ENCODE measurements at regions of chr11 and their contacts with region 1.

Region 1: DNA sequence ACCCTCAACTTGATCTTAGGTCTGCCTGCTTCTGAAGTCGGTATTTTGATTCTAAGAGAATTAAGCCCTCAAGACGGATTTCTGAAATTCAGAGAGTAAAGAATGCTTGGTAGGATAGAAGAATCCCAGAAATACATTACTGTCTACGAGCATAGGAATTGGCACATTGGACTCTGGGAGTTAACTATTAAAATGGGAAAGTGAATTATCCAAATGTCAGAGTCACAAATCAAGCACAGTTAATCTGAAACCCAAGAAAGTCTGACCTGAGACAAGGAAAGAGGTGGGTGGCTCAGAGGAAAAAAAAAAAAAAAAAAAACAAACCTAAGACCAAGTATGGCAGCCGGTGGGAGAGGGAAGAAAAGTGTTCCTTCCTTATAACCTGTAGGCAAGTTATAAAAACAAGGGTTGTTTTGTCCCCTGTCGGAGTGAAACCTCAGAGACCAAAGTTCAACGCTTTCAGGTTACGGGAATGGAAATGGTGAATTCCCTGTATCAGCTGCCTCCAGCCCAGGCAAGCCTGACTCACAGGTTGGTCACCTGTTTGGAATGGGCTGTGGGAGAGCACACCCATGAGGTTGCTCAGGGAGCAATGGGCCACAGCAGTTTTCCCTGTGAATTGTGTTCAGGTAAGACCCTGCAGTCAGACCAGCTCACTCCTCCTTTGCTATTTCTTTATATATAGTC is 139.0 kb downstream of the ETS1 start:
- DNase-seq: peak; percentile 95
- ATAC-seq: peak; percentile 96
- H3K4me3 ChIP-seq: peak overlapping the region; percentile 0 to 51; a peak in 2 of 4 replicates
- H3K27ac ChIP-seq: peak overlapping the region; percentile 23; the same call in 1 of the 2 replicates
- H3K4me1 ChIP-seq: peaks cover 14 to 34% of the 10 kb centered on the region in 2 experiments
- H3K27me3 ChIP-seq: no peaks in the 10 kb centered on the region
- CTCF ChIP-seq: no peak
- POLR2A ChIP-seq: no peak
- RAD21 ChIP-seq: peak; percentile 69

Region 2: GRCh38 chr11:128210148-128210940 is 238.0 kb before region 1 on chr11:
- CTCF ChIA-PET with region 1: no interaction called
- POLR2A ChIA-PET with region 1: no interaction called
- RAD21 ChIA-PET with region 1: no interaction called
- intact Hi-C with region 1: loop called (anchors 5 kb)
- DNase-seq: peak; percentile 98
- ATAC-seq: peak; percentile 87
- H3K4me3 ChIP-seq: peak overlapping the region; percentile 1 to 43; a peak in 2 of 4 replicates
- H3K27ac ChIP-seq: peak overlapping the region; percentile 21; the same call in 1 of the 2 replicates
- H3K4me1 ChIP-seq: peaks cover 38 to 51% of the 10 kb centered on the region in 2 experiments
- H3K27me3 ChIP-seq: no peaks in the 10 kb centered on the region
- CTCF ChIP-seq: no peak
- POLR2A ChIP-seq: no peak
- RAD21 ChIP-seq: peak; percentile 25; the same call in 1 of the 2 replicates

Region 3: GRCh38 chr11:128302425-128303186 is 145.7 kb before region 1 on chr11:
- CTCF ChIA-PET with region 1: no interaction called
- POLR2A ChIA-PET with region 1: no interaction called
- RAD21 ChIA-PET with region 1: no interaction called
- intact Hi-C with region 1: no loop called
- DNase-seq: no peak
- ATAC-seq: no peak
- H3K4me3 ChIP-seq: no peak overlapping the region
- H3K27ac ChIP-seq: no peak overlapping the region
- H3K4me1 ChIP-seq: no peaks in the 10 kb centered on the region
- H3K27me3 ChIP-seq: peaks cover 34% of the 10 kb centered on the region
- CTCF ChIP-seq: no peak
- POLR2A ChIP-seq: no peak
- RAD21 ChIP-seq: no peak

Region 4: DNA sequence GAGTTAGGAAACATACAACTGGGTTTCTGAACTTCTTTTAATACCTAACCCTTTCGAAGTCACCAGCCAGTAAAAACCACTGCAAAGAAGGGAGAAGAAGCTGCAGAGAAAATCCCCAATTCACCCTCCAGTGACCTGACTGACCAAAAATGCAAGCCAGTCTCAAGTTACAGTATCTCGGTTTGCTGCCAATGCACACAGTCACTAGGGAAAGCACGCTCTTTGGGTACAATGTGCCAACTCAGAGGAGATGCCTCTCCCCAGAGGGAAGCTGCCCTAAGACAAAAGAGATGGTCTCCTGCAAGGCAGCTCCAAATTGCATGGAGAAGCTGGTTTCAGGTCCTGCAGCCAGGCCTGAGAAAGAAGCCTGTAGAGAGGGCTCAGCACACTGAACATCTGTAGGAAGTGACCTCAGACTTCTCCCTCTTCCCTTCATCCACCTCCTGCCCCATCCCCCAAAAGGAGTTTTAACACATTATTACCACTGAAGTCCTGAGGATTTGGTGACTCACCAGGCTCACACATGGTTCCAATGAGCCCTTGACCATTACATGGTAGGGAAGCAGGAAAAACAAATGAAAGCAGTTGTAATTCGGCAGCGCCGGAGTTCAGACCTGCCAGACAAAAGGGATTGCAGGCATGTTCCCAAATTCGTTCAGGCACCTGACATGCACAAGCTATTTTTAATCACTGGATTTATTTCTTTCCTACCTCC is 48.9 kb after region 1 on chr11:
- CTCF ChIA-PET with region 1: no interaction called
- POLR2A ChIA-PET with region 1: interaction called, 3 read pairs
- RAD21 ChIA-PET with region 1: no interaction called
- intact Hi-C with region 1: loop called (anchors 2 kb)
- DNase-seq: peak; percentile 83
- ATAC-seq: peak; percentile 89
- H3K4me3 ChIP-seq: peak overlapping the region; percentile 20 to 47
- H3K27ac ChIP-seq: peak overlapping the region; percentile 67
- H3K4me1 ChIP-seq: peaks cover 21 to 48% of the 10 kb centered on the region in 2 experiments
- H3K27me3 ChIP-seq: no peaks in the 10 kb centered on the region
- CTCF ChIP-seq: no peak
- POLR2A ChIP-seq: no peak
- RAD21 ChIP-seq: no peak; the same call in 1 of the 2 replicates

Region 5: DNA sequence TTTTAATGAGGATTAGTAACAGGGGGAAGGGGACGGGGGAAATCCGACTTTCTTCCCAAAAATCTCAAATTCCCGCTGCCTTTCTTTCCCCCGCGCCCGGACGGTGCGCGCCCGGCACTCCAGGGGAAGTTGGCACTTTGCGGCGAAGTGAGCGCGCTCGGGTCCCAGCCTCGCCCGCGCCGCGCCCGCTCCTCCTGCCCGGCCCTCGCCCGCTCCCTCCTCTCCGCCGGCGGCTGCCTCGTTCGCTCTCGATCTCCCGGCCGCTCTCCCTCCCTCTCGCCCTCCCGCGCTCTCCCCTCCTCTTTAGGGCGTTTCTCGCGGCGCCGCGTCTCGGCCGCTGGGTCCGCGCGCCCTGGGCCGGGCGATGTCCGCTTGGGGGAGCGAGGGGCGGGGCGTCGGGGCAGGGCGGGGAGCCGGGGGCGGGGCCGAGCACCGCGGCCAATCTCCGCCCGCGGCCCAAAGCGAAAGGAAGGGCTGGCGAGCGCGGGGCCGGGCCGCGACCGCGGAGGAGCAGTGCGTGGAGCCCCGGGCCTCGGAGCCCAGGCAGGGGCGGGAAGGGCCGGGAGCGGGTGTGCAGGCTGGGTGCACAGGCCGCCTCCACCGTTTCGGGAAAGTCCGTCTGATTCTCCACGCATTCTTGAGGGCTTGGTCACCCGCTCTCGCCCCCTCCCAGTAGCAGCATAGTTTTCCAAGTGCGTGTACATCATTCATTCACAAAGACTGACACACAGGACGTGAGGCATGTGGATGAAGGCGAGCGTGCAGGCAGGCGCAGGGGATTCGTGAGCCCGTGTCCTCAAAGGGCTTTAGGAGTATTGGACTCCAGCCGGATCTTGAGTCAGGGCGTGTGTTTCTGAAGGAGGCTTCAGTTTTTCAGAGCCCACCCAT is 74.0 kb after region 1 on chr11:
- CTCF ChIA-PET with region 1: interaction called, 3 read pairs
- POLR2A ChIA-PET with region 1: no interaction called
- RAD21 ChIA-PET with region 1: no interaction called
- intact Hi-C with region 1: loop called (anchors 5 kb)
- DNase-seq: peak; percentile 82
- ATAC-seq: peak; percentile 93
- H3K4me3 ChIP-seq: peak overlapping the region; percentile 58 to 65
- H3K27ac ChIP-seq: peak overlapping the region; percentile 49
- H3K4me1 ChIP-seq: peaks cover 5 to 43% of the 10 kb centered on the region in 2 experiments; a peak in 3 of 4 replicates
- H3K27me3 ChIP-seq: no peaks in the 10 kb centered on the region
- CTCF ChIP-seq: no peak
- POLR2A ChIP-seq: no peak
- RAD21 ChIP-seq: no peak